Posterior cingulate gyrus (tissue), 11 donors: ENCODE measurements at regions of chr7 and their contacts with region 1.

Region 1: DNA sequence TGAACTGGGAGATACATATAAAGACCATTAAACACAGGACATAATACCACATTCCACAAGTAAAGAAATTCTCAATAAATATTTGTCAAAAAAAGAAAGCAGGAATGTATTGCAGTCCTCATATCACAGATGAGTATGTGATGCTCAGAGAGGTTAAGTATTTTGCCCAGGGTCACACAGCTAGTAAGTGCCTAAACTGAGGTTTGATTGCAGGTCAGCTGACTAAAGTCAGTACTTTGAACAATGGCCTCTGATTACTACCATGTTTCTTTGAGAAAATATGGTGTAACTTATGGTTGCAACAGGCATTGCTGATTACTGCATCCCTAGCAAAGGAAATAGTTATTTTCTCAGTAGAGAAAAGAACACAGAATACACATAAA is 267.1 kb downstream of the ELMO1 start:
- DNase-seq: no peak

Region 2: GRCh38 chr7:36967387-36967786 is 214.2 kb before region 1 on chr7:
- intact Hi-C with region 1: loop called (anchors 1 kb)
- DNase-seq: peak in 7 of 10 donors; percentile 31 to 92 (median 61)

Region 3: GRCh38 chr7:36986429-36987362 is 194.8 kb before region 1 on chr7:
- intact Hi-C with region 1: loop called (anchors 5 kb)
- DNase-seq: peak; percentile 50 to 95 (median 80)

Region 4: DNA sequence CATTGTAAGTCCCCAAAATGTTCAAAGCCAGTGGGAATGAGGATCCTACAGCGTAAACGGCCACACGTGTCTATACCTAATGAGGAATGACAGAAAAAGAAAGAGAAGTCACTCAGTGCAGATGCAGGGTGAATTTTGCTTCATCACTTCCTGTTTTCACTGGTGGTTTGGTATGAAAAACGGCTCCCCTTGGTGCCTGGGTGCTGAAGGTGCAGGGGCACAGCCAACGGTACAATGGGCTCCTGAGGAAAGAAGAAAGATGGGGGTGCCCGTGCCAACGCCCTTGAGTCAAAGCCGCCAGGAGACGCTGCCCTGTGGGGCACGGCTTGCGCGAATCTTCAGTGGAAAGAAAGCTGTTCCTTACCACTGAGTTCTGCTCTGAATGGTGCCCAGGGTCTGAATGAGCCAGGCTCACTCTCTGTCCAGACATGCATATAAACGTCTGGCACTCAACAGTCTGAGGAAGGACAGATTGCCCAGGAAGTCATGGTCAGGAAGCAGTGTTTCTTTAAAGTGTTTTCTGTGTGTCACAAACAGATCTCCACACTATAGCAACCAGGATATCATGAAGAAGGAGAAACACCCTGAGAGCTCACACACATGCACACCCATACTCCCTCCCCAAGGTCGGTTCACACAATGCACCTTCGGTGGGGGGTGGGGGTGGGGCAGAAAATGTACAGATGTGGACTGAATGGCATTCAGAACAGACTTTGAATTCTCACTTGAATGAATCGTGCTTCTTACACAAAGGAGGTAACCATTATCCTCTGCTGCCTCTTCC is 161.3 kb after region 1 on chr7:
- intact Hi-C with region 1: no loop called
- DNase-seq: no peak